Kidney (tissue), 22 donors: ENCODE measurements at regions of chr1 and their contacts with region 1.

Region 1: GRCh38 chr1:157978586-157979403 is 14.7 kb upstream of the KIRREL1 start:
- DNase-seq: peak in 4 of 5 donors; percentile 49 to 70 (median 61)
- H3K4me3 ChIP-seq: no peak overlapping the region
- H3K27ac ChIP-seq: no peak overlapping the region
- H3K4me1 ChIP-seq: no peaks in the 10 kb centered on the region
- H3K27me3 ChIP-seq: no peaks in the 10 kb centered on the region
- CTCF ChIP-seq: no peak

Region 2: DNA sequence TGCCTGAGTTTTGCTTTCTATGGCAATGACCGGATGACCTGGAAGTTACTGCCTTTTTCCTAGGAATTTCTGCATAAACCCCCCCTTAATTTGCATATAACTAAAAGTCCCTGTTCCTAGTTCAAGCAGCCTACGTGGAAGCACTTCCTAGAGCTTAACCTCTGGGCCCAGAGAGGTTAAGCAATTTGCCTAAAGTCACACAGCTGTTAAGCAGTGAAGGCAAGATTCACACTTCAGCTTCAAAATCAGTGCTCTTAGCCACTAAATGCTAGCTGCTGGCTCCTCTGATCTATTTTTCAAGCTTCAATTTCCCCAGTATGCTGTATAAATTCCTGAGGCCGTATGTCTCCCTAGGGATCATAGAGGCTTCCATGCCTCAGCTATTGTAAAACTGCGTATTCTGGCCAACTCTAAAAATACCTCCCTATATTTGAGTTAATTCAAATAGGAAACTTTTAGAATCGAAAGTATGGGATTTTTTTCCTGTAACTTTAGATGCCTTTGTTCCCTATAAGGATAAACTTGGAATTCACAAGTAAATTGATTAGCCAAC is 84.1 kb before region 1 on chr1:
- intact Hi-C with region 1: no loop called
- DNase-seq: no peak
- H3K4me3 ChIP-seq: no peak overlapping the region
- H3K27ac ChIP-seq: no peak overlapping the region
- H3K4me1 ChIP-seq: no peaks in the 10 kb centered on the region
- H3K27me3 ChIP-seq: no peaks in the 10 kb centered on the region
- CTCF ChIP-seq: no peak

Region 3: DNA sequence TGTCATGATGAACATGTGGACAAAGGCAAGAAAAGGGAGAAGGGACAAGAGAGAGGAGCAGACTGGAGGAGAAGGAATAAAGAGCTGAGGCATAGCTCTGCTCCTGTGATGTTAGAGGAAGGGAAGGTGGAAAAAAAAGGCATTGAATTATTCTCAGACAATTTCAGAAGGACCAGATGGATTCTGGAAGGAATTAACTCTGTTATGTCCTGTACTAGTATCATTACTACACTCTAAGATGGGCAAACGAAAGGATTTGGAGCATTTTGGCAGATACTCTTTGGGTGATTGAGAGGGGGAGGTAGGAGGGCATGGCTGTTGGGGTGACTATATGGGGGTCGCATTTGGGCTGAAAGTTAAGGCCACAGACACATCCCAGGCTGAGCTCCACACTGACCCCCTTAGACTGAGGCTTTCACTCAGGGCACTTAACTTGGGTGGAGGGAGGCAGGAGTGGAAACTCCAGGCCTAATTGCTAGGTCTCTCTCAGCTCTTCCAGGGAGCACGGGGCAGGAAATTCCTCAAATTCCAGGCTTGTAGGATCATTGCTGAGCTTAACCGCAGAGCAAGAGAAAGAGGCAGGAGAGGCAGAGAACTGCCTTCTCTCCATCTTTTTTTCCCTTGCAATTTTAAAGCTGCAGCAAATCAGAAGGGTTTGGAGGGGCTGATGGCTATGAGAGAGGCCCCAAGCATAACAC is 40.5 kb after region 1 on chr1:
- intact Hi-C with region 1: no loop called
- DNase-seq: peak in 4 of 5 donors; percentile 67 to 97 (median 90)
- H3K4me3 ChIP-seq: peak overlapping the region in 1 of 3 donors; percentile 5
- H3K27ac ChIP-seq: peak overlapping the region; percentile 68 to 91
- H3K4me1 ChIP-seq: peaks cover 15 to 36% (median 35%) of the 10 kb centered on the region in 3 donors
- H3K27me3 ChIP-seq: no peaks in the 10 kb centered on the region
- CTCF ChIP-seq: no peak

Region 4: GRCh38 chr1:158124999-158125398 is 146.2 kb after region 1 on chr1:
- intact Hi-C with region 1: loop called (anchors 5 kb)
- DNase-seq: peak; percentile 89 to 98 (median 94)
- H3K4me3 ChIP-seq: no peak overlapping the region
- H3K27ac ChIP-seq: no peak overlapping the region
- H3K4me1 ChIP-seq: peaks cover 0 to 7% (median 4%) of the 10 kb centered on the region in 3 donors
- H3K27me3 ChIP-seq: no peaks in the 10 kb centered on the region
- CTCF ChIP-seq: peak; percentile 99

Region 5: GRCh38 chr1:158901623-158902022 is 922.8 kb after region 1 on chr1:
- intact Hi-C with region 1: no loop called
- DNase-seq: no peak
- H3K4me3 ChIP-seq: no peak overlapping the region
- H3K27ac ChIP-seq: no peak overlapping the region
- H3K4me1 ChIP-seq: no peaks in the 10 kb centered on the region
- H3K27me3 ChIP-seq: no peaks in the 10 kb centered on the region
- CTCF ChIP-seq: no peak